ENCODE measurements at regions of chr17 and their contacts with region 1.

Region 1: GRCh38 chr17:4573669-4574068 is 10.7 kb upstream of the SMTNL2 start:
- DNase-seq: peak; percentile 88
- ATAC-seq: peak; percentile 100
- H3K4me3 Mint-ChIP-seq: peak overlapping the region; percentile 22
- H3K27ac Mint-ChIP-seq: peak overlapping the region; percentile 11
- H3K4me1 Mint-ChIP-seq: peaks cover 18% of the 10 kb centered on the region
- H3K27me3 Mint-ChIP-seq: peaks cover 6% of the 10 kb centered on the region

Region 2: GRCh38 chr17:4658478-4659305 is 85.0 kb after region 1 on chr17:
- CTCF ChIA-PET with region 1: no interaction called
- POLR2A ChIA-PET with region 1: no interaction called
- intact Hi-C with region 1: loop called in 1 of 2 experiments (anchors 1 kb)
- DNase-seq: peak; percentile 87
- ATAC-seq: peak; percentile 99
- H3K4me3 Mint-ChIP-seq: no peak overlapping the region
- H3K27ac Mint-ChIP-seq: peak overlapping the region; percentile 1
- H3K4me1 Mint-ChIP-seq: peaks cover 12% of the 10 kb centered on the region
- H3K27me3 Mint-ChIP-seq: peaks cover 13% of the 10 kb centered on the region

Region 3: DNA sequence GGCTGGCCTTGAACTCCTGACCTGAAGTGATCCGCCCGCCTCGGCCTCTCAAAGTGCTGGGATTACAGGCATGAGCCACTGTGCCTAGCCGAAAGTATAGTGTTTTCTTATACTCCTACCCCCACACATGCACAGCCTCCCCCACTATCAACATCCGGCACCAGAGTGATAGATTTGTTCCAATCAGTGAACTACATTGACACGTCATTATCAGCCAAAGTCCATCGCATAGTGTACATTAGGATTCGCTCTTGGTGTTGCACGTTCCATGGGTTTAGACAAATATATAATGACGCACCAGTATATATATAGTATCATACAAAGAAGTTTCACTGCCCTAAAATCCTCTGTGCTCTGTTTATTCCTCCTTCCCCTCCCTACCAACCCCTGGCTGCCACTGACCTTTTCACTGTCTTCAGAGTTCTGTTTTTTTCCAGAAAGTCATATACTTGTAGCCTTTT is 186.1 kb after region 1 on chr17:
- CTCF ChIA-PET with region 1: no interaction called
- POLR2A ChIA-PET with region 1: no interaction called
- intact Hi-C with region 1: no loop called
- DNase-seq: no peak
- ATAC-seq: no peak
- H3K4me3 Mint-ChIP-seq: no peak overlapping the region
- H3K27ac Mint-ChIP-seq: no peak overlapping the region
- H3K4me1 Mint-ChIP-seq: no peaks in the 10 kb centered on the region
- H3K27me3 Mint-ChIP-seq: peaks cover 7% of the 10 kb centered on the region

Measured in activated CD4-positive, alpha-beta T cell treated with anti-CD3 and anti-CD28 coated beads for 36 hours (primary cell).